ENCODE measurements at regions of chrX and their contacts with region 1.

Region 1: DNA sequence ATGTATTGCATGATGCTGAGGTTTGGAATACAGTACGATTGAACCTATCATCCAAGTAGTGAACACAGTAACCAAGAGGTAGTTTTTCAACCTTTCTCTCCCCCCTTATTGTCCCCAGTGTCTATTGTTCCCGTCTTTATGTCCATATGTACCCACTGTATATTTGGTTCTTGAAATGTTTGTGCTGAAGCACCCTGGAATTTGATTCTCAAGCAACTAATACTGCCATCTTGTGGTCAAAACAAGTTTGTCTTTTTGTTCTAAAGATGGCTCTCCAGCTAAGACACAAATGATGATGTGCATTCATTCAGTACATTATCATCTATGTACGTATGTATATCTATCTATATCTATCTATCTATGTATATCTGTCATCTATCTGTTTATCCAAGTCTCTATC is 33.5 kb upstream of the DCX start:
- H3K4me3 ChIP-seq: no peak overlapping the region
- H3K27ac ChIP-seq: no peak overlapping the region
- H3K4me1 ChIP-seq: no peaks in the 10 kb centered on the region
- CTCF ChIP-seq: no peak

Region 2: DNA sequence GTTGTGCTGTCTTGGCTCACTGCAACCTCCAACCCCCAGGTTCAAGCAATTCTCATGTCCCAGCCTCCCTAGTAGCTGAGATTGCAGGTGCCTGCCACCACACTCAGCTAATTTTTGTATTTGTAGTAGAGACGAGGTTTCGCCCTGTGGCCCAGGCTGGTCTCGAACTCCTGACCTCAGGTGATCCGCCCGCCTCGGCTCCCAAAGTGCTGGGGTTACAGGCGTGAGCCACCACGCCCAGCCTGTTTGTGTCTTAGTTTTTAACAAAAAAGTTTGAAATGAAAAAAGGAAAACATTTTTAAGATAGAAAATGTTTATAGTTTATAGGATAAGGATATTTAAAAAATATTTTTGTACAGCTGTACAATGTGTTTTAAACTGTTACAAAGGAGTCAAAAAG is 237.6 kb before region 1 on chrX:
- CTCF ChIA-PET with region 1: no interaction called
- POLR2A ChIA-PET with region 1: no interaction called
- H3K4me3 ChIP-seq: no peak overlapping the region
- H3K27ac ChIP-seq: no peak overlapping the region
- H3K4me1 ChIP-seq: no peaks in the 10 kb centered on the region
- CTCF ChIP-seq: no peak

Region 3: DNA sequence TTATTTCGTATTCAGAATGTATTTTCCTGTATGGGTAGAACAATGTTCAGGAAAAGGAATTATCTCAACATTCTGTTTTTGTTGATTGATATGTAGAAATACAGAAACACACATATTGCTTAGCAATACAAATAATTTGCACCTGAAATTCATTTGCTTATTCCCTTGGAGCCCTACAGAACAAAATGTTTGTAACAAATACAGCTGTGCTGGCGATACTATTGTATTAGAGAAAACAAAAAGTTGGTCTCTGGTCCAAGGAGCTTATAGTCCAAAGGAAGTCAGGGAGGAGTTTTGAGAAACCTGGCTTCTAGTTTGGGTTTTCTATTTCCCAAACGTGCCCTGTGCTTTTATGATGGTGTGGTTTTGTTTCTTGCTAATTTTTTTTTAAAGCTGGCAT is 137.4 kb before region 1 on chrX:
- CTCF ChIA-PET with region 1: no interaction called
- POLR2A ChIA-PET with region 1: no interaction called
- H3K4me3 ChIP-seq: no peak overlapping the region
- H3K27ac ChIP-seq: no peak overlapping the region
- H3K4me1 ChIP-seq: no peaks in the 10 kb centered on the region
- CTCF ChIP-seq: no peak

Region 4: DNA sequence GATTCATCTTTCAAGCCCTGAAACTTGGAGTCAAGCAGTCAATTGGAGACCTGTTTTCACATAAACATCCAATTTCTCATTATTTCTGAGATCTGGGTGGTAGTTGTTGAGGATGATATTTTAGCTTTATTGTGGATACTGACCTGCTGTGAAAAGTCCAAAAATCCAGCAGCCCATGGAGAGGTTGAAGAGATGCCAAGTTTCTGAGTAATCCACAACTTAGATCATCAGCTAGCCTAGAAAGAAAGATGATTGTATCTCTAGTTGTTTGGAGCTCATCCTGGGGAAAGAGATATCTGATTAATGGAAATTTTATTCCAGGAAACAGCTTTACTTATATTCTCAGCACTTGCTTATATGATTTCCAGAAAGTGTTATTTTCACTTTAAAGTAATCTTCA is 15.1 kb after region 1 on chrX:
- CTCF ChIA-PET with region 1: interaction called, 21 read pairs
- POLR2A ChIA-PET with region 1: no interaction called
- H3K4me3 ChIP-seq: no peak overlapping the region
- H3K27ac ChIP-seq: no peak overlapping the region
- H3K4me1 ChIP-seq: no peaks in the 10 kb centered on the region
- CTCF ChIP-seq: no peak

Region 5: DNA sequence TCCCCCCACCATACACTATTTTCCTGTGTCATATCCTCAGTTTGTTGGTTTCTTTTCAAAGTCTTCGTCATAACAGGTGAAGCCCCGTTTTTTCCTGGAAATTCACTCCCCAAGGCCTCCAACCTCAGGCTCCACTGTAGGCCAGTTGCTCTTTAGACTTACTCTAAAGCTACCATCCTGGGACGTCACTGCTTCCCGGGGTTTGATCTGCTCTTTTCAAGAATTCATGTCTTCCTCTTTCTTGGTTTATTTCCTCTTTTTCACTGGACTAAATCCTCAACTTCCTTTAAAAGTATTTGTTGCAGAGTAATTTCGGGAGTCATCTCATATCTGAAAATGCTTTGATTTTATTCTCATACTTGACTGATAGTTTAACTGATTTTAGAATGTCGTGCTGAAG is 59.5 kb after region 1 on chrX:
- CTCF ChIA-PET with region 1: no interaction called
- POLR2A ChIA-PET with region 1: no interaction called
- H3K4me3 ChIP-seq: no peak overlapping the region
- H3K27ac ChIP-seq: no peak overlapping the region
- H3K4me1 ChIP-seq: no peaks in the 10 kb centered on the region
- CTCF ChIP-seq: no peak